ENCODE measurements at regions of chrX and their contacts with region 1.

Region 1: GRCh38 chrX:3651276-3651675 is 62.2 kb downstream of the PRKX start:
- DNase-seq: no peak
- H3K4me3 Mint-ChIP-seq: no peak overlapping the region
- H3K27ac Mint-ChIP-seq: no peak overlapping the region
- H3K4me1 Mint-ChIP-seq: no peaks in the 10 kb centered on the region
- H3K27me3 Mint-ChIP-seq: no peaks in the 10 kb centered on the region

Region 2: DNA sequence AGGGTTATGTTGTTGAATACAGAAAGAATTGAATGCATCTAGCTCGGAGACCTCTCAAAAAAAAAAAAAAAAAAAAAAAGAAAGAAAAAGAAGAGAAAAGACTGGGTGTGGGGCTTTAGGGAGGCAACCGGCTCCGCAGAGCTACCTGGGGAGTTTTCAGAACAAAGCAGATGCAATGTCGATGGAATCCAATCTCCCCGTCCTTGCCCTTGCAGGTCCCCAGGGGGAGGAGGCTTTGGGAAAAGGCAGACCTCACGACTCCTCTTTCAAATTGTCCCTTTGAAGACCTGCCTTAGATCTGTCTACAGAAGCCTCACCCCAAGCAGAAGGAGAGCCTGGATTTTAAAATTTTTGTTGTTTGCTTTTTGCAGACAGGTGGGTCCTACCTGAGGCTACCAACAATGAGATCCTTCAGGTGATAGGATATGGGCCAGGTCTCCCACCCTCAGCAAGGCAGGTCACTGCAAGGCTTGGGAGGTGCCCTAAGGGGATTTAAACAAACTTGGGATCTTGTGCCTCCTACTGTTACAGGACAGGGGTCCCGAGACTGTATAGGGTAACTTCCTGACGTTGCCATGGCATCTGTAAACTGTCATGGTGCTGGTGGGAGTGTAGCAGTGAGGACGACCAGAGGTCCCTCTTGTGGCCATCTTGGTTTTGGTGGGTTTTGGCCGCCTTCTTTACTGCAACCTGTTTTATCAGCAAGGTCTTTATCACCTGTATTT is 137.4 kb after region 1 on chrX:
- CTCF ChIA-PET with region 1: interaction called, 3 read pairs
- intact Hi-C with region 1: loop called (anchors 2 kb)
- DNase-seq: peak; percentile 22
- H3K4me3 Mint-ChIP-seq: no peak overlapping the region
- H3K27ac Mint-ChIP-seq: no peak overlapping the region
- H3K4me1 Mint-ChIP-seq: no peaks in the 10 kb centered on the region
- H3K27me3 Mint-ChIP-seq: no peaks in the 10 kb centered on the region